T-cell (primary cell): ENCODE measurements at regions of chr2 and their contacts with region 1.

Region 1: GRCh38 chr2:157876066-157876787 is at the start of gene ACVR1:
- DNase-seq: peak; percentile 53 to 88 (median 65)
- ATAC-seq: peak; percentile 74 to 78 (median 76)
- H3K4me3 ChIP-seq: peak within 1 kb of the TSS; percentile 64 to 76
- H3K4me3 Mint-ChIP-seq: peak within 1 kb of the TSS; percentile 89 to 94 (median 92)
- H3K27ac ChIP-seq: peak within 1 kb of the TSS; percentile 21
- H3K27ac Mint-ChIP-seq: peak within 1 kb of the TSS; percentile 90 to 91
- H3K4me1 ChIP-seq: peaks cover 13 to 24% of the 10 kb centered on the region in 2 experiments
- H3K4me1 Mint-ChIP-seq: peaks cover 53 to 66% (median 63%) of the 10 kb centered on the region in 3 donors
- H3K27me3 ChIP-seq: no peaks in the 10 kb centered on the region
- H3K27me3 Mint-ChIP-seq: no peaks in the 10 kb centered on the region
- total RNA-seq, gene ACVR1: 18.3 to 31.5 (median 25.1) TPM

Region 2: DNA sequence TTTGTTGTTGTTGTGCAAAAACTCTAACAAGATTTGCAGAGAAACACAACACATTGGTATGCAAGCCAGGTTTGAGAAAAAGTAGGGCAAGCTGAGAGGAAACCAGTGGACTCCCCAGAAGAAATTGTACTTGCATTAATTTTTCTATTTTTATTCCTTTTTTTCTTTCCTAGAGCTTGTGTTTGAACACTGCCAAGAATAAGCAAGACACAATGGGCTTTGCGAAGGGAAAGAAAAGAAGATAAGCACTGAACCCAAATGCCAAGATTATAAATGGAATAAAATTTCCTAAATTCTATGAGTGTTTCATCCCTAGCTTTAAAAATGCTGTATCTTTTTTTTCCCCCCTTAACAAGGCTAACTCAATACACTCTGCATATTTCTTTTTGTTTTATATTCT is 415.3 kb before region 1 on chr2:
- CTCF ChIA-PET with region 1: no interaction called
- POLR2A ChIA-PET with region 1: interaction called in 1 of 2 experiments, 13 read pairs
- DNase-seq: no peak
- ATAC-seq: no peak
- H3K4me3 ChIP-seq: no peak overlapping the region
- H3K4me3 Mint-ChIP-seq: peak overlapping the region in 1 of 3 donors; percentile 37
- H3K27ac ChIP-seq: no peak overlapping the region
- H3K27ac Mint-ChIP-seq: peak overlapping the region; percentile 79 to 80
- H3K4me1 ChIP-seq: peaks cover 26 to 74% of the 10 kb centered on the region in 2 experiments
- H3K4me1 Mint-ChIP-seq: peaks cover 80 to 89% (median 85%) of the 10 kb centered on the region in 3 donors
- H3K27me3 ChIP-seq: no peaks in the 10 kb centered on the region
- H3K27me3 Mint-ChIP-seq: no peaks in the 10 kb centered on the region

Region 3: DNA sequence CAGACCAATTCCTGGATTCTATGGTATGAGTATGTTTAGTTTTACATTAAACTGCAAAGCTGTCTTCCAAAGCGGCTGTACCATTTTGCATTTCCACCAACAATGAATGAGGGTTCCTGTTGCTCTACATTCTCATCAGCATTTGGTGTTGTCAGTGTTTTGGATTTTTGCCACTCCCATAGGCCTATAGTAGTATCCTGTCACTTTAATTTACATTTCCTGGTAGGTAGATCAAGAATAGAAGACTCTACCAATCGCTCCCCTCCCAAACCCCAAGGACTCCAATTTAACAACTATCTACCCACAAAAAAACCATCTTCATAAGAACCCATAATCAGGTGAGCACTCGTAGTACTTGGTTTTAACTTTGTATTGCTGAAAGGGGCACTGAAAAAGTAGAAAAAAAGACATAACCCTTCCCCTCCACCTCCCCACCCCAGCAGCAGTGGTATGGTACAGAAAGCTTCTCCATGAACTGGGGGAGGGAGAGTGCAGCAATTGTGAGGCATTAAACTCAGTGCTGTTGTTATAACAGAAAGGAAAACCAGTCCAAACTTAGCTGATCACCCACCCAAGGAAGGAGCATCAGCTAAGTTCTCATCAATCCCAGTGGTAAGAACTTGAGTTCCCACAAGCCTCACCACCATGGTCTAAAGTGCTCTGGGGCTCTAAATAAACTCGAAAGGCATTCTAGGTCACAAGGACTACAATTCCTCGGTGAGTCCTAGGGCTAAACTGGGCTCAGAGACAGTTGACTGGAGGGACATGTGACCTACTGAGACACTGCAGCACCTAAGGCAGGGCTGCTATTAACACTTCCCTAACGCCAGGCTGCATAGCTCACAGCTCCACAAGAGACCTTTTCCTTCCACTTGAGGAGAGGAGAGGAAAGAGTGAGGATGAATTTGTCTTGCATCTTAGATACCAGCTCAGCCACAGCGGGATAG is 396.9 kb before region 1 on chr2:
- CTCF ChIA-PET with region 1: no interaction called
- POLR2A ChIA-PET with region 1: no interaction called
- DNase-seq: no peak
- ATAC-seq: no peak
- H3K4me3 ChIP-seq: no peak overlapping the region
- H3K4me3 Mint-ChIP-seq: peak overlapping the region in 2 of 3 donors; percentile 26 to 48
- H3K27ac ChIP-seq: no peak overlapping the region
- H3K27ac Mint-ChIP-seq: peak overlapping the region; percentile 7 to 82
- H3K4me1 ChIP-seq: peaks cover 6 to 9% of the 10 kb centered on the region in 2 experiments
- H3K4me1 Mint-ChIP-seq: peaks cover 44 to 59% (median 46%) of the 10 kb centered on the region in 3 donors
- H3K27me3 ChIP-seq: no peaks in the 10 kb centered on the region
- H3K27me3 Mint-ChIP-seq: no peaks in the 10 kb centered on the region

Region 4: GRCh38 chr2:157777427-157777826 is 98.8 kb before region 1 on chr2:
- CTCF ChIA-PET with region 1: no interaction called
- POLR2A ChIA-PET with region 1: no interaction called
- DNase-seq: peak in 31 of 35 experiments; percentile 9 to 58 (median 36)
- ATAC-seq: no peak
- H3K4me3 ChIP-seq: no peak overlapping the region
- H3K4me3 Mint-ChIP-seq: no peak overlapping the region
- H3K27ac ChIP-seq: no peak overlapping the region
- H3K27ac Mint-ChIP-seq: no peak overlapping the region
- H3K4me1 ChIP-seq: peaks cover 0 to 9% of the 10 kb centered on the region in 2 experiments
- H3K4me1 Mint-ChIP-seq: peaks cover 9 to 13% (median 13%) of the 10 kb centered on the region in 3 donors
- H3K27me3 ChIP-seq: no peaks in the 10 kb centered on the region
- H3K27me3 Mint-ChIP-seq: no peaks in the 10 kb centered on the region

Region 5: DNA sequence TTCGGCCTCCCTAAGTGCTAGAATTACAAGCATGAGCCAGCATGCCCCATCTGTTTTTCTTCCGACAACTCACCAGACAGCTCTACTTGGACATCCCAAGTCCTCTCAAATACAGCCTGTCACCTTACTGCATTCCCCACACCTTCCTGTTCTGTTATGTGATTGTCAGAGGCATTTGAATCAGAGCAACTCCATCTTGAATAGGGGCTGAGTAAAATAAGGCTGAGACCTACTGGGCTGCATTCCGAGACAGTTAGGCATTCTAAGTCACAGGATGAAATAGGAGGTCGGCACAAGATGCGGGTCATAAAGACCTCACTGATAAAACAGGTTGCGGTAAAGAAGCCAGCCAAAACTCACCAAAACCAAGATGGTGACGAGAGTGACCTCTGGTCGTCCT is 17.4 kb before region 1 on chr2:
- CTCF ChIA-PET with region 1: no interaction called
- POLR2A ChIA-PET with region 1: no interaction called
- DNase-seq: no peak
- ATAC-seq: no peak
- H3K4me3 ChIP-seq: no peak overlapping the region
- H3K4me3 Mint-ChIP-seq: no peak overlapping the region
- H3K27ac ChIP-seq: no peak overlapping the region
- H3K27ac Mint-ChIP-seq: no peak overlapping the region
- H3K4me1 ChIP-seq: no peaks in the 10 kb centered on the region
- H3K4me1 Mint-ChIP-seq: peaks cover 5 to 17% (median 12%) of the 10 kb centered on the region in 3 donors
- H3K27me3 ChIP-seq: no peaks in the 10 kb centered on the region
- H3K27me3 Mint-ChIP-seq: no peaks in the 10 kb centered on the region

Region 6: DNA sequence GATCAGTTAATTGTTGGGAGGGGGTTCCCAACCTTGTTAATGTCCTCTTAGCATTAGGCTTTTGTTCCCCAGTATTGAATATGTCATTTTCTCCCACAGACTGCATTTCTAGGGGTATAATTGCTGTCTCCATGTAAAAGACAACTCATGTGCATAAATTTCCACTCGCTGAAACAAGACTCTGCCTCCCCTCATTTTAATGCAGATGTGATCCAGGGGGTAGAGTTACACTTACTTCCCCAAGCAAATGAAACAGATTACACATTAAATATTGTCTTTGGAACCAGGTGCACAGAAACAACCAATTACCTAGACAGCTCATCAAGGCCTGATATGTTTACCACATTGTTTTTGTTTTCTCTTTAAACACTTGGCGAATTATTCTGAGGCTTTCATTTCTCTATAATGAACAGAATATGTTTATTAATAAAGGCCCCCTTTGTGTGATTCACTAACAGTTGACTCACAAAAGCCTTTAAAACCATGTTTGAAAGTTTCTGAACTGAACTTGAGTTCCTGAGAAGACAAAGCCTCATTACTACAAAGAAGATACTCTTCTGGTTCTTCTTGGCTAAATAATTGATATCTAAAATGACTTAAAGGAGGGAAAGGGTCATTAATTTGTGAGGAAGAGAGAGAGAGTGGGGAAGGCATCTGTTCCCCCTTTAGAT is 14.9 kb after region 1 on chr2:
- CTCF ChIA-PET with region 1: interaction called in 1 of 2 experiments, 10 read pairs
- POLR2A ChIA-PET with region 1: no interaction called
- DNase-seq: no peak
- ATAC-seq: no peak
- H3K4me3 ChIP-seq: no peak overlapping the region
- H3K4me3 Mint-ChIP-seq: peak overlapping the region; percentile 51 to 72 (median 71)
- H3K27ac ChIP-seq: peak overlapping the region; percentile 52
- H3K27ac Mint-ChIP-seq: peak overlapping the region; percentile 96 to 99
- H3K4me1 ChIP-seq: peaks cover 21 to 37% of the 10 kb centered on the region in 2 experiments
- H3K4me1 Mint-ChIP-seq: peaks cover 51 to 63% (median 57%) of the 10 kb centered on the region in 3 donors
- H3K27me3 ChIP-seq: no peaks in the 10 kb centered on the region
- H3K27me3 Mint-ChIP-seq: no peaks in the 10 kb centered on the region

Region 7: DNA sequence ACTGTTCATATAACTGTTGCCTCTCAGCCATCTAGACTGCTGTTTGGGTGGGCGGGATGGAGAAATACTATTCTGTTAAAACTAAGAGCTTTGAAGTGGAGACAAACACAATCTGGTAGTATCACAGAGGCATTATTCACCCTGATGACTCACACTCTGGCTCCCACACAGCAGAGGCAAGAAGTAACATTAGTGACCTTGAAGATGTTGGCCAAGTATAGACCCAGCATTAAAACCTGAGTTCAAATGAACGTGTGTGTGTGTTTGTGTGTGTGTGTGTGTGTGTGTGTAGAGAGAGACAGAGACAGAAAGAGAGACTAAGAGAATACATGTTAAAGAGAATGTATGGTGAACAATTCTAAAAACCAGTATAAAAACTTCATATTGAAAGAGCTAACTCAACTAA is 22.4 kb after region 1 on chr2:
- CTCF ChIA-PET with region 1: interaction called, 4 to 14 read pairs
- POLR2A ChIA-PET with region 1: interaction called in 1 of 2 experiments, 5 read pairs
- DNase-seq: peak in 12 of 35 experiments; percentile 3 to 57 (median 20)
- ATAC-seq: peak; percentile 43 to 80 (median 78)
- H3K4me3 ChIP-seq: no peak overlapping the region
- H3K4me3 Mint-ChIP-seq: peak overlapping the region; percentile 79 to 83 (median 80)
- H3K27ac ChIP-seq: peak overlapping the region; percentile 83
- H3K27ac Mint-ChIP-seq: peak overlapping the region; percentile 99 to 100
- H3K4me1 ChIP-seq: peaks cover 54% of the 10 kb centered on the region in 2 experiments
- H3K4me1 Mint-ChIP-seq: peaks cover 75 to 78% (median 77%) of the 10 kb centered on the region in 3 donors
- H3K27me3 ChIP-seq: no peaks in the 10 kb centered on the region
- H3K27me3 Mint-ChIP-seq: no peaks in the 10 kb centered on the region

Region 8: GRCh38 chr2:157922336-157922735 is 46.1 kb after region 1 on chr2:
- CTCF ChIA-PET with region 1: no interaction called
- POLR2A ChIA-PET with region 1: no interaction called
- DNase-seq: no peak
- ATAC-seq: no peak
- H3K4me3 ChIP-seq: no peak overlapping the region
- H3K4me3 Mint-ChIP-seq: no peak overlapping the region
- H3K27ac ChIP-seq: no peak overlapping the region
- H3K27ac Mint-ChIP-seq: no peak overlapping the region
- H3K4me1 ChIP-seq: no peaks in the 10 kb centered on the region
- H3K4me1 Mint-ChIP-seq: no peaks in the 10 kb centered on the region
- H3K27me3 ChIP-seq: peaks cover 0 to 3% of the 10 kb centered on the region in 2 experiments
- H3K27me3 Mint-ChIP-seq: peaks cover 0 to 2% of the 10 kb centered on the region in 2 donors